IMR-90 (cell line): ENCODE measurements at regions of chr6 and their contacts with region 1.

Region 1: DNA sequence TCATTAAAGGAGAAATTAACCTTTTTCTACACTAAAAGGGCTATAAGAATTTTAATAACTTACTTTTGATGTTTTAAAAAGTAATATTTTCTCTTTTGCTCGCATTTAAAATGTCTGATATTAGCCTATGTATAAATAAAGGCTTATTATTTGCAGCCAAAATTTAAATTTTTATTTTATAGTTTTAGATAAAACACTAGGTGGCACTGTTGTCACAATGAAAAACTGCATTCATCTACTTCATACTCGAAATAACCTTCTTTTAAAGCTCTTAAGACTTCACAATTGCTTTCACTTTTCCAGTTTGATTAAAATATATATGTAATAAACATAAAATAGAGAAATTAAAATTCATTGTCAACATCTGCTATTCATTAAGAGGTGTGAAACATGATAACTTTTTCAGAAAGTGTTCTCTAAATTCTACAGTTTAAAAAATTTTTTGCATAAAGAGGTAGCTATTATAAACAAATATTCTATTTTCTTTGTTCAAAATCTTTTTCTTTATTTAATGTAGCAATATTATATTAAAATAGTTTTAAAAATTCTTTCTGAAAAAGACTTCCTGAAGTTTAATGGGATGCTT is 78.8 kb upstream of the DEFB112 start:
- DNase-seq: peak; percentile 24
- ATAC-seq: no peak
- H3K4me3 ChIP-seq: no peak overlapping the region
- H3K27ac ChIP-seq: no peak overlapping the region
- H3K4me1 ChIP-seq: no peaks in the 10 kb centered on the region
- H3K27me3 ChIP-seq: no peaks in the 10 kb centered on the region
- CTCF ChIP-seq: peak; percentile 54
- POLR2A ChIP-seq: no peak
- RAD21 ChIP-seq: peak; percentile 51

Region 2: DNA sequence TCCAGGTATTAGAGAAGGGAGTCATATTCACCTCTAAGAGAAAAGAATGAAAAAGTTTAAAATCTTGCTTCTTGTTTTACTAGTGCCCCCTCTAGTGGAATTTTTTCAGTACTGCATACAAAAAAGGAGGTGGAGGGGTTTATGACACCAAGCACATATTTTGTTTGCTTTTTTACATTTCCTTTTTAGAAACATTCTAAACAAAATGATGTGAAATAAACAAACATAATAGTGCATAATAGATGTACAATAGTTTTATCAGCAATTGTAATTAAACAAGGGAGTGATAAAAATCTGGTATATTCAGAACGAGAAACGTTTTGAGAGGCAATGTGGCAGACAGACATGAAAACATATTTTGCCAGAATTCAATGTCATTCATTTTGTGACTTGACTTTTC is 473.8 kb after region 1 on chr6:
- CTCF ChIA-PET with region 1: no interaction called
- POLR2A ChIA-PET with region 1: no interaction called
- dilution Hi-C with region 1: no loop called
- in situ Hi-C with region 1: loop called (anchors 5 kb)
- intact Hi-C with region 1: loop called (anchors 1 kb)
- DNase-seq: peak; percentile 21
- ATAC-seq: peak; percentile 59; the same call in 1 of the 2 replicates
- H3K4me3 ChIP-seq: no peak overlapping the region
- H3K27ac ChIP-seq: no peak overlapping the region
- H3K4me1 ChIP-seq: no peaks in the 10 kb centered on the region
- H3K27me3 ChIP-seq: no peaks in the 10 kb centered on the region
- CTCF ChIP-seq: peak; percentile 71
- POLR2A ChIP-seq: no peak
- RAD21 ChIP-seq: peak; percentile 57

Region 3: DNA sequence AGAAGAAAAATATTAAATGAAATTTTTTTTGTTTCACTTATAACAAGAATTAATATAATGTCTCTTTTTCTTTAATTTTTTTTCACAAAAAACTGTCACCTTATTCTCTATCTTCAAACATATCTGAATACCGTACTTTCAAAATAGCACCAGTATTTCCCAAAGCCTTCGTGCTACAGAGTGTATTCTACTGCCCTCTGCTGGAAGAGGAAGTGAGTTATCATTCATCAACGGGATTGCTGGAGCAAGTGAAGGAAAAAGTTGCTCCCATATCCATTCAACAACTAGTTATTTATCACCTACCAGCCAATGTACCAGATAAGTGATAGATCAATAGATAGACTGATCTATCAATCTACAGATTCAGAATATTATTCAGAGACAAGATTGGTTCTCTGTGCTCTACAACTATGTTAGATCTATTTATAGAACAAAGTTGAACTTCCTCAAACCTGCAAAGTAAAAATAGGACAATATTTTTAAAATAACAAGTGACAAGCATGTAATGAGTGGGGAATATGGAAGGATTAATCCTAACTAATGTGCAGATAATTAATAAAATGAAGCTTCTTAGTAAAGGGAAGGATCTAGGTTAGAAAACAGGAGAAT is 663.5 kb after region 1 on chr6:
- CTCF ChIA-PET with region 1: no interaction called
- POLR2A ChIA-PET with region 1: no interaction called
- dilution Hi-C with region 1: no loop called
- in situ Hi-C with region 1: no loop called
- intact Hi-C with region 1: loop called (anchors 1 kb)
- DNase-seq: peak; percentile 30
- ATAC-seq: peak; percentile 48; the same call in 1 of the 2 replicates
- H3K4me3 ChIP-seq: no peak overlapping the region
- H3K27ac ChIP-seq: no peak overlapping the region
- H3K4me1 ChIP-seq: no peaks in the 10 kb centered on the region
- H3K27me3 ChIP-seq: no peaks in the 10 kb centered on the region
- CTCF ChIP-seq: peak; percentile 68
- POLR2A ChIP-seq: no peak
- RAD21 ChIP-seq: peak; percentile 51

Region 4: DNA sequence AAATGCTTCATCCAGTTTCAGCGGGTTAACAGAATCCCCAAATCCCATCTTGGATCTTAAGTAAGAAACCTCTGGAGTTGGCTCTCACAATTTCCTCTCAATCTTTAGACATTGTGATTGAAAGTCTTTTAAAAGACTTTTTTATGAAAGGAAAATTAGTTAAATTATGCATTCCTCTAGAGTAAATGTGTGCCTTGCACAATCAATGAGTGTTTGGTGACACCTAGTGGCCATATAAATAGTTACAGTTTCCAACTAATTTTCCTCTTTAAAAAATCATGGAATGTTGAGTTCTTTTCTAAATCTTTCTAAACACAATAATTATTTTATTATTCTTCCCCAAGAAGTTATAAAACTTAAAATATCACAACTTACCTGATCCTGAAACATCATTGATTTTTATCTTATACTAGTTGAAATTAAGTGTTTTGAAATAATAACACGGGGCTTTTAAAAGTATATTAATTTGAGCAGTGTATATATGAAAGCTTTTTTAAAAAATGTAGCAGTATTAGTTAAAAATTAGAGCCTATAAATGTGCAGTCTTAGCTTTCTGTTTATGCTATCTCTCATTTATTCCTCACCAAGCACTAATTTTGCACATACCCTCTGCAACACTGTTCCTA is 1892.5 kb after region 1 on chr6:
- CTCF ChIA-PET with region 1: no interaction called
- POLR2A ChIA-PET with region 1: no interaction called
- dilution Hi-C with region 1: no loop called
- in situ Hi-C with region 1: no loop called
- intact Hi-C with region 1: loop called (anchors 10 kb)
- DNase-seq: peak; percentile 34
- ATAC-seq: no peak
- H3K4me3 ChIP-seq: no peak overlapping the region
- H3K27ac ChIP-seq: no peak overlapping the region
- H3K4me1 ChIP-seq: no peaks in the 10 kb centered on the region
- H3K27me3 ChIP-seq: no peaks in the 10 kb centered on the region; the same call in 1 of the 2 replicates
- CTCF ChIP-seq: peak; percentile 70
- POLR2A ChIP-seq: no peak
- RAD21 ChIP-seq: peak; percentile 76